Transverse colon (tissue), 4 donors: ENCODE measurements at regions of chr2 and their contacts with region 1.

Region 1: GRCh38 chr2:168424112-168424951 is 31.7 kb upstream of the CERS6 start:
- DNase-seq: no peak
- H3K4me3 ChIP-seq: no peak overlapping the region
- H3K27ac ChIP-seq: no peak overlapping the region
- H3K4me1 ChIP-seq: no peaks in the 10 kb centered on the region
- H3K27me3 ChIP-seq: no peaks in the 10 kb centered on the region
- CTCF ChIP-seq: no peak
- EP300 ChIP-seq: no peak
- POLR2A ChIP-seq: no peak

Region 2: GRCh38 chr2:168378960-168379669 is 45.2 kb before region 1 on chr2:
- in situ Hi-C with region 1: no loop called
- intact Hi-C with region 1: loop called (anchors 1 kb)
- DNase-seq: no peak
- H3K4me3 ChIP-seq: no peak overlapping the region
- H3K27ac ChIP-seq: no peak overlapping the region
- H3K4me1 ChIP-seq: no peaks in the 10 kb centered on the region
- H3K27me3 ChIP-seq: no peaks in the 10 kb centered on the region
- CTCF ChIP-seq: no peak
- EP300 ChIP-seq: no peak
- POLR2A ChIP-seq: no peak

Region 3: DNA sequence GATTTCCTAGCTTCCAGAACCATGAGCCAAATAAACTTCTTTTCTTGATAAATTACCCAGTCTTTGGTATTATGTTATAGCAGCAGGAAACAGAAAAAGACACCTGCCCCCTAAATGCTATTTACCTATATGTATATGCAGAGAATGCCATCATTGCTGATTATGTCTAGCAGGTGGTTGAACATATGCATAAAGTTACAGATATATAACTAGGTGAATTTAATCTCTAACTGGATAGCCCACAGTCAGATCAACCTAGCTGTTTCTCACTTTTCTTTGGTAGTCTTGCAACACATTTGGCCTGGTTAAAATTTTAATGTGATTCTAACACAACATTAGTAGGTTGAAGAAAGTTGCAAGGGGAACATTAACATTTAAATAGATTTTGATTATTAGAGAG is 24.6 kb after region 1 on chr2:
- in situ Hi-C with region 1: no loop called
- intact Hi-C with region 1: loop called (anchors 1 kb)
- DNase-seq: no peak
- H3K4me3 ChIP-seq: no peak overlapping the region
- H3K27ac ChIP-seq: no peak overlapping the region
- H3K4me1 ChIP-seq: no peaks in the 10 kb centered on the region
- H3K27me3 ChIP-seq: no peaks in the 10 kb centered on the region
- CTCF ChIP-seq: no peak
- EP300 ChIP-seq: no peak
- POLR2A ChIP-seq: no peak

Region 4: GRCh38 chr2:169082995-169083394 is 658.7 kb after region 1 on chr2:
- in situ Hi-C with region 1: no loop called
- intact Hi-C with region 1: no loop called
- DNase-seq: no peak
- H3K4me3 ChIP-seq: no peak overlapping the region
- H3K27ac ChIP-seq: no peak overlapping the region
- H3K4me1 ChIP-seq: peaks cover 0 to 6% (median 0%) of the 10 kb centered on the region in 4 donors
- H3K27me3 ChIP-seq: no peaks in the 10 kb centered on the region
- CTCF ChIP-seq: no peak
- EP300 ChIP-seq: no peak
- POLR2A ChIP-seq: no peak